Activated CD4-positive, alpha-beta T cell treated with anti-CD3 and anti-CD28 coated beads for 36 hours (primary cell): ENCODE measurements at regions of chr3 and their contacts with region 1.

Region 1: DNA sequence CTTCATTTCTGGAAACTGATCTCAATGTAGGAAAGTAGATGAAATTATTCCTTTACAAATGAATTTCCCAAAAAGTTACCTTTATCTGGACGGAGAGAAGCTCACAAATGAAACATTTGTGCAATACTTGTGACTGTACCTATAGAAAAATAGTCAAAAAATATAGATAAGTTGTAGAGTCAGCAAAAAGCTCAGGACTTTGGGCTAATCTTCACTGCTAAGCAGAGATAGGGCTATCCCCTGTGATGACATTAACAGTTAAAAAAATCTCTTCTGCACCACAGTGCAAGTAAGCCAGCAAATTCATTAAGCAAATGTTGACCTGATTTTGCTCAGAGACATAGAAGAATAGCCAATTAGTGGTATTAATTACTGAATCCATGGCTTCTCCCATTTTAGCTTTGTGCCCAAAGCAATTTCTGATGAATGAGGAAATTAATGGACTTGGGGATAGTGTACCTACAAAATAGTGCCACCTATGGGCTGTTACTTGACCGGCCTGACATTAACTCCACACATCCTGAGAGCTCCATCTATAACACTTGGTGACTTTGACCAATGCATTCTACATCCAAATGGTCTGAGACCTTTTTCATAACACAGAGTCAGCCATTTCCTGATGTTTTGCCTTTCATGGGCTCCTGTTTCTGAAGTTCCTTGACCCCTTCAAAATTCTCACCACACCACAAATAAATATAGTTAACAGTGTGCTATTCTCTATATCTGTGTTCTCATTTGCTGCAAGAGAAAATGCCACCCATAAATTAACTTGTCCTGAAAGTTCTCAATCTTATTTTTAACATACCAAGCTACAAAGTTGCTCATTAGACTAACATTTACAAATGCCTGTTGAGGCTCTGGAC is 105.0 kb downstream of the SSR3 start:
- DNase-seq: no peak
- ATAC-seq: no peak
- H3K4me3 Mint-ChIP-seq: no peak overlapping the region
- H3K27ac Mint-ChIP-seq: no peak overlapping the region
- H3K4me1 Mint-ChIP-seq: no peaks in the 10 kb centered on the region
- H3K27me3 Mint-ChIP-seq: peaks cover 7% of the 10 kb centered on the region

Region 2: GRCh38 chr3:156307704-156308103 is 142.2 kb before region 1 on chr3:
- CTCF ChIA-PET with region 1: no interaction called
- POLR2A ChIA-PET with region 1: no interaction called
- intact Hi-C with region 1: no loop called
- DNase-seq: no peak
- ATAC-seq: no peak
- H3K4me3 Mint-ChIP-seq: no peak overlapping the region
- H3K27ac Mint-ChIP-seq: no peak overlapping the region
- H3K4me1 Mint-ChIP-seq: no peaks in the 10 kb centered on the region
- H3K27me3 Mint-ChIP-seq: peaks cover 10% of the 10 kb centered on the region

Region 3: DNA sequence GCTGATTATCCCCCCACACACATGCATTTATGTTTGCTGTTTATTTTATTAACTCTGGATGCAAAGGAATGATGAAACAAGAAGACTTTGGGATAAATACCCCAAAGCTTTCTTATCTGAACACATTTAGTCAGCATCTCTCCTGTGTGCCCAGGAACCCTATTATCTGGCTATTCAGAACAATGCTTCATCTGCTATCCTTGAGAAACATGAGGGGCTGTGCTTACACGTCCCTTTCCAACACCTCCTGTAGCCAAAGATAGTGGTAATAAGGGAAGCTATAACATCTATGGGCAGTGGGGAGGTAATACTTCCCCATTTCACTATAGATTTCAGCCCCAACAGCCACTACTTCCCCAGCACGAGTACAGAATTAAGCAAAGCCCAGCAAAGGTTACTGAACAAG is 10.3 kb after region 1 on chr3:
- CTCF ChIA-PET with region 1: interaction called, 12 read pairs
- POLR2A ChIA-PET with region 1: no interaction called
- intact Hi-C with region 1: no loop called
- DNase-seq: no peak
- ATAC-seq: no peak
- H3K4me3 Mint-ChIP-seq: no peak overlapping the region
- H3K27ac Mint-ChIP-seq: no peak overlapping the region
- H3K4me1 Mint-ChIP-seq: no peaks in the 10 kb centered on the region
- H3K27me3 Mint-ChIP-seq: no peaks in the 10 kb centered on the region